Activated CD8-positive, alpha-beta T cell treated with anti-CD3 and anti-CD28 coated beads, Interleukin-2, amount 10 ng/mL, durations not matched to agents 7 days and 5 days (primary cell): ENCODE measurements at regions of chr21 and their contacts with region 1.

Region 1: GRCh38 chr21:34129039-34129891 is 55.9 kb downstream of the MRPS6 start:
- DNase-seq: peak; percentile 85
- ATAC-seq: peak; percentile 90
- H3K4me3 Mint-ChIP-seq: peak overlapping the region; percentile 38
- H3K27ac Mint-ChIP-seq: peak overlapping the region; percentile 83
- H3K4me1 Mint-ChIP-seq: peaks cover 76% of the 10 kb centered on the region
- H3K27me3 Mint-ChIP-seq: no peaks in the 10 kb centered on the region

Region 2: GRCh38 chr21:34154878-34155277 is 25.6 kb after region 1 on chr21:
- CTCF ChIA-PET with region 1: interaction called, 13 read pairs
- POLR2A ChIA-PET with region 1: interaction called, 6 read pairs
- DNase-seq: peak; percentile 79
- ATAC-seq: peak; percentile 88
- H3K4me3 Mint-ChIP-seq: peak overlapping the region; percentile 16
- H3K27ac Mint-ChIP-seq: peak overlapping the region; percentile 91
- H3K4me1 Mint-ChIP-seq: peaks cover 52% of the 10 kb centered on the region
- H3K27me3 Mint-ChIP-seq: no peaks in the 10 kb centered on the region

Region 3: GRCh38 chr21:34190576-34191321 is 61.5 kb after region 1 on chr21:
- CTCF ChIA-PET with region 1: interaction called, 11 read pairs
- POLR2A ChIA-PET with region 1: interaction called, 4 read pairs
- DNase-seq: no peak
- ATAC-seq: no peak
- H3K4me3 Mint-ChIP-seq: no peak overlapping the region
- H3K27ac Mint-ChIP-seq: no peak overlapping the region
- H3K4me1 Mint-ChIP-seq: peaks cover 46% of the 10 kb centered on the region
- H3K27me3 Mint-ChIP-seq: no peaks in the 10 kb centered on the region

Region 4: DNA sequence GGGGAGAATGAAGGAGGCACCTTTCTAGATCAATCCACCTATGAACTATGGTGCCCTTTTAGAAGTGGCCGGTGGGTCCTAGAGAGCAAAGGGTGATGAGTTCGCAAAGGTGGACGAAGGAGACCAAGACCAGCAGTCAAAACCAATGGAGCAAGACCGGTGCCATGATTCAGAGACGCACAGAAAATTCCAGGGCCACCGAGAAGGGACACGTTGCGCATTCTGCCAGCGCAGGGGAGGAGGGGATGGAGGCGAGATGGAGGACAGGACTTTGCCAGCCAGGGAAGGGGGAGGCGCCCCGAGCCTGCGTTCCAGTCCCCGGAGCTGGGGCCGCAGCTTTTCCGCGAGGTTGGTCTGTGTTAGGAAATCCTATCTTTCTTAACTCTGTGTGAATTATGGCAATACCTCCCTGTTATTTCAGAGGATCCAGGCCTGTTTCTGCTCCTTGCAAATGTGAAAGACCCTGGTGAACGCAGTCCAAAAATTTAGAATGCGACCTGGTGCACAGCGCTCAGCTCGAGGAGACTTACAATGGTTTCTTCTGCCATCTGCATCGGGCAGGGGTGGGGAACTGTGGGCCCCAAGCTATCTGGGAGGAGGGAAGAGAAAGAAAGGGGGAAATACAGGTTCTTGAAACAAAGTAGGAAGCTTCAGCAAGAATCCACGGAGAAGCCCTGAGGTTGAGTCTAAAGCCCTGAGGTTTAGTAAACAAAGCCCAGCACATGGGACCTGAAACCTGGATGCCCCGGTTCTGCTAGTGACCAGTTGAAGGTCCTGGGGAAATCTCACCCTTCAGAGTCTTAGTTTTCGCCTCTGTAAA is 73.5 kb after region 1 on chr21:
- CTCF ChIA-PET with region 1: interaction called, 22 read pairs
- POLR2A ChIA-PET with region 1: interaction called, 8 read pairs
- DNase-seq: no peak
- ATAC-seq: no peak
- H3K4me3 Mint-ChIP-seq: peak overlapping the region; percentile 73
- H3K27ac Mint-ChIP-seq: no peak overlapping the region
- H3K4me1 Mint-ChIP-seq: peaks cover 60% of the 10 kb centered on the region
- H3K27me3 Mint-ChIP-seq: no peaks in the 10 kb centered on the region

Region 5: GRCh38 chr21:34227386-34227852 is 98.2 kb after region 1 on chr21:
- CTCF ChIA-PET with region 1: no interaction called
- POLR2A ChIA-PET with region 1: no interaction called
- DNase-seq: no peak
- ATAC-seq: no peak
- H3K4me3 Mint-ChIP-seq: no peak overlapping the region
- H3K27ac Mint-ChIP-seq: no peak overlapping the region
- H3K4me1 Mint-ChIP-seq: no peaks in the 10 kb centered on the region
- H3K27me3 Mint-ChIP-seq: no peaks in the 10 kb centered on the region